ENCODE measurements at regions of chr12 and their contacts with region 1.

Region 1: DNA sequence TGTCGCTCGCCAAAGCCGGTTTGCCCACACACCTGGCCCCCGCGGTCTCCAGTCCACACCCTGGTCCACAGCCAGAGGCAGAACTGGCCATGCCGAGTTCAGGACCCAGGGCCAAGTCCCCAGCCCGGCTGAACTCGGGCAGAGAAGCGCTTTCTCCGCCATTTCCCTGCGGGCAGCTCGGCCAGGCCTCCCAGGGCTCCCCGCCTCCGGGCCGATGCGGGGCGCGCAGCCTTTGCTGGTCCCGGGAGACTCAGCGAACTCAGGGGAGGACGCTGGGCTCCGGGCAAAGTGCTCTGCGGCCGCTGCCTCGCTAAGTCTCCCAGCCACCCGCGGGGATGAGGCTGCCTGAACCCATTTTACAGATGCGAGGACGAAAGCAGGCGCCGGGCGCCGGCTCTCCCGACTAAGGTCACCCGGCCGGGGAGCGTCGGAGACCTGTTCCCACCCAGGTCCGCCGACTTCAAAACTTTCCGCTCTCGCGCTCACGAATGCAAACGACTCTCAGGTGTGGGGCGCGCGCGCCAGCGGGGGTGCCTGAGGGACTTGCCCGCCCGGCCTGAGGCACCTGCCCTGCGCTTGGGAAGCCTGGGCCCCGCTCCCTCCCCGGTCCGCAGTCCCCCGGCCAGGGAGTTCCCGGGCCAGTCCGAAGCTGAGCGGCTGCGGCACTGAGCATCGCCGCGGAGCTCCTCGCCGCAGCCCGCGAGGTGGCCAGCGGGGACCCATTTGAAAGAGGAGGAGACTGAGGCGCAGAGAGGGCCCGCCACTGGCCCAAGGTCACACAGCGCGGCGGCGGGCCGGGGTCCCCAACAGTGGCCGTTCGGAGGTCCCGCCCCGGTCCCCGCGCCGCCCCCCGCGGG is 627 bp downstream of the TESC start:
- DNase-seq: peak in 2 of 5 donors; percentile 32 to 72
- ATAC-seq: peak in 2 of 4 donors; percentile 39 to 42
- H3K4me3 ChIP-seq: peak overlapping the region; percentile 34 to 91 (median 74)
- H3K27ac ChIP-seq: peak overlapping the region in 11 of 12 donors; percentile 13 to 82 (median 62)
- H3K4me1 ChIP-seq: peaks cover 0 to 55% (median 24%) of the 10 kb centered on the region in 12 donors
- H3K27me3 ChIP-seq: peaks cover 0 to 33% (median 6%) of the 10 kb centered on the region in 9 donors
- CTCF ChIP-seq: no peak
- POLR2A ChIP-seq: no peak

Region 2: DNA sequence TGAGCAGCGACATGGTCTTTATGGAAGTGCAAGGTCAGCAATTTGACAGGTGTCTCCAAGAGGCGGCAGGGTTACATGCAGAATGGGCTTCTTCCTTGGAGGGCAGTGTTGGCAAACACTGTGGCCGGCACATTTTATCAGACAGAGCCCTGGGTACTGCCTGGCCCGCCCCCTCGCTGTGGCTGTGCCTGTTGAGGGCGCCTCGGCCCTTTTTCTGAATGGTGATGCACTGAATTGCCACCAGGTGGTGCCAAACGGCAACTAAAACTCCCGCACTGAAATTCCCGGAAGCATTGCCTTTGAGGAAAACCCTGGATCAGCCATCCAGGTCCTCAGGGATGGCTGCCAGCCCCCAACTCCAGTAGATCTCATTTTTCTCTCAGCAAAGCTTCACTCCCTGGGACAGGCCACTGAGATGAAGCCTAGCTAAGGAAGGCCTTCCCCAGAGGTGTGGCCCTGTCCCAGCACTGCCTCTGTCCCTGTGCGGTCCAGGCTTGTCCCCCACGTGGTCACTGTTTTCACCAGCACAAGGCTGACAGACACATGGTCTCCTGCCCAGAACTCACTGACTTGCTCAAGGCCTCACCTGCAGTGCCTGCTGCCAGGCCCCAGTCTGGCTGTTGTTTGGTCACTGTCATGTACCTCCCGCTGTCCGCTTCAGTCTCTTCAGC is 73.0 kb before region 1 on chr12:
- intact Hi-C with region 1: loop called in 4 of 10 experiments (anchors 5 kb)
- DNase-seq: peak in 4 of 5 donors; percentile 68 to 73 (median 70)
- ATAC-seq: peak; percentile 84 to 94 (median 88)
- H3K4me3 ChIP-seq: no peak overlapping the region
- H3K27ac ChIP-seq: peak overlapping the region in 9 of 12 donors; percentile 20 to 65 (median 52)
- H3K4me1 ChIP-seq: peaks cover 0 to 26% (median 9%) of the 10 kb centered on the region in 12 donors
- H3K27me3 ChIP-seq: no peaks in the 10 kb centered on the region
- CTCF ChIP-seq: peak; percentile 89 to 98 (median 94)
- POLR2A ChIP-seq: no peak

Region 3: DNA sequence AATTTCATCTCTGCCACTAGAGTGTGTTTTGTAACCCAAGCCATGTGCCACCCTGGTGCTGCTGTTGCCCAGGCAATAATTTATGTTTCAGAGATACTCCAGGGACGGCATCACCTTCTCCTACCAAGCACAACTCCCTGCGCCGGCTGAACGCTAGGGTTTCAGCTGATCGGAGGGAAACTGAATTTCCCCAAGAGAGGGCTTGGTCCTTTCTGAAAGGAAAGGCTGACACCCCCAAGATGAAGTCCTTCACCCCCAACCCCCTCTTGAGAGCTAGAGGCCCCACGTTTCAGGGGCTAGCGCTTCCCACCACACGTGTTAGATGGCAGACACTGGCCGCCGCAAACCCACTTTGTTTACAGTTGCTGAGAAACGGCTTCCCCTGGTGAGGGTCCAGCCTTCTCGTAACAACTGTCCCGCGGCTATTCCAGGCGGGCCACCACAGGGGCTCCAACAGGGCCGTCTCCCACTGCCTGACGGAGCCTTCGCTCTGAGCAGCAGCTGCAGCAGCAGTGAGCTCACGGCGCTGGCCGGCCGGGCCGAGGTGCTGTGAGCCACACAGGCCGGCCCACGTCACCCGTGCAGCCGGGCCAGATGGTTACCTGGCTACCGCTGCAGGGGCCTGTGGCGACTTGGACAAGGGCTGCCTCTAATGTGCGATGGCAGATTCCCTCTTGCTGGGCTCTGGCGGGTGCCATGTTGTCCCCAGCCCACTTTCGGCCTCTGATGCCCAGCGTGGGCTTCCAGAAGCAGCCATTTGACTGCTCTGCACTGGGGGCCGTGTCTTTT is 65.8 kb before region 1 on chr12:
- intact Hi-C with region 1: loop called in 4 of 10 experiments (anchors 5 kb)
- DNase-seq: peak in 1 of 5 donors; percentile 34
- ATAC-seq: peak in 3 of 4 donors; percentile 30 to 44 (median 40)
- H3K4me3 ChIP-seq: no peak overlapping the region
- H3K27ac ChIP-seq: peak overlapping the region in 8 of 12 donors; percentile 18 to 76 (median 48)
- H3K4me1 ChIP-seq: peaks cover 0 to 54% (median 22%) of the 10 kb centered on the region in 12 donors
- H3K27me3 ChIP-seq: peaks cover 0 to 7% (median 0%) of the 10 kb centered on the region in 9 donors
- CTCF ChIP-seq: no peak
- POLR2A ChIP-seq: no peak

Region 4: DNA sequence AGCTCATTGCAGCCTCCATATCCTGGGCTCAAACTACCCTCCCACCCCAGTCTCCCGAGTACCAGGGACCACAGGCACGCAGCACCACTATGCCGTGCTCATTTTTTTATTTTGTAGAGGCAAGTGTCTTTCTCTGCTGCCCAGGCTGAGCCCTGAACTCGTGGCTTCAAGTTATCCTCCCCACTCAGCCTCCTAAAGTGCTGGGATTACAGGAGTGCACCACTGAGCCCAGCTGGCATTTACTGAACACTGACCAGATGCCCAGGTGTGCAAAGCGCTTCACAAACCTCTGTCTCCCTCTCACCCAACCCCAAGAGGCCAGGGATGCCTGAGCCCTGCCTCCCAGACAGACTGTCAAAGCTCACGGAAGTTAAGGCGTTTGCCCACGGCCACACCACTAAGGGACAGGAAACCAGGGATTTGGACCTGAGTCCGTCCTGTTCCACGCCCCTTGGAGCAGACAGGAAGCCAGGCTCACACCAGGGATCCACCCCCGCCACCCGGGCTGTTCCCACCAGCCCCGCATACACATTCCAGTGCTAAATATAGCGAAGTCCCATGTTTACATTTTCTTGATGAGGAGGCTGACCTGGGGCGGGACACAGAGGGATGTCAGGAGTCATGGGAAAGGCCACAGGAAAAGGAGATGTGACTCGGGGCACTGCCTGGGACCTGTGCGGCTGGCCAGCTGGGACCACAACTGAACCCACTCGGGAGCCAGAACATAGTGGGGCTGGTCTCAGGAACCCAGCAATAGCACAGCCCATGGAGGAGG is 50.6 kb before region 1 on chr12:
- intact Hi-C with region 1: loop called in 5 of 10 experiments (anchors 5 kb)
- DNase-seq: peak; percentile 73 to 86 (median 77)
- ATAC-seq: peak; percentile 19 to 61 (median 25)
- H3K4me3 ChIP-seq: no peak overlapping the region
- H3K27ac ChIP-seq: peak overlapping the region; percentile 38 to 99 (median 90)
- H3K4me1 ChIP-seq: peaks cover 5 to 82% (median 59%) of the 10 kb centered on the region in 12 donors
- H3K27me3 ChIP-seq: no peaks in the 10 kb centered on the region
- CTCF ChIP-seq: no peak
- POLR2A ChIP-seq: no peak